PC-3 (cell line): ENCODE measurements at regions of chr13 and their contacts with region 1.

Region 1: GRCh38 chr13:102800145-102801041 is 1.5 kb downstream of the BIVM start:
- DNase-seq: peak; percentile 72
- ATAC-seq: peak; percentile 64
- H3K4me3 ChIP-seq: peak overlapping the region; percentile 85
- H3K27ac ChIP-seq: no peak overlapping the region
- H3K4me1 ChIP-seq: no peaks in the 10 kb centered on the region
- H3K27me3 ChIP-seq: no peaks in the 10 kb centered on the region
- CTCF ChIP-seq: peak; percentile 65

Region 2: GRCh38 chr13:102580552-102581169 is 219.7 kb before region 1 on chr13:
- CTCF ChIA-PET with region 1: no interaction called
- POLR2A ChIA-PET with region 1: no interaction called
- intact Hi-C with region 1: loop called (anchors 1 kb)
- DNase-seq: peak; percentile 78
- ATAC-seq: peak; percentile 76
- H3K4me3 ChIP-seq: no peak overlapping the region
- H3K27ac ChIP-seq: no peak overlapping the region
- H3K4me1 ChIP-seq: no peaks in the 10 kb centered on the region
- H3K27me3 ChIP-seq: peaks cover 18% of the 10 kb centered on the region
- CTCF ChIP-seq: peak; percentile 69

Region 3: GRCh38 chr13:102773441-102774215 is 26.8 kb before region 1 on chr13 and contains the start of gene TEX30:
- CTCF ChIA-PET with region 1: no interaction called
- POLR2A ChIA-PET with region 1: no interaction called
- intact Hi-C with region 1: loop called (anchors 2 kb)
- DNase-seq: peak; percentile 84
- ATAC-seq: peak; percentile 96
- H3K4me3 ChIP-seq: peak within 1 kb of the TSS; percentile 92
- H3K27ac ChIP-seq: no peak within 1 kb of the TSS
- H3K4me1 ChIP-seq: peaks cover 17% of the 10 kb centered on the region
- H3K27me3 ChIP-seq: no peaks in the 10 kb centered on the region
- CTCF ChIP-seq: no peak
- total RNA-seq, gene TEX30: 15.3 and 16.7 TPM in 2 replicates

Region 4: GRCh38 chr13:102825921-102826706 is 25.7 kb after region 1 on chr13:
- CTCF ChIA-PET with region 1: no interaction called
- POLR2A ChIA-PET with region 1: interaction called, 3 read pairs
- intact Hi-C with region 1: loop called (anchors 2 kb)
- DNase-seq: peak; percentile 79
- ATAC-seq: peak; percentile 76
- H3K4me3 ChIP-seq: peak overlapping the region; percentile 44
- H3K27ac ChIP-seq: peak overlapping the region; percentile 84
- H3K4me1 ChIP-seq: peaks cover 25% of the 10 kb centered on the region
- H3K27me3 ChIP-seq: no peaks in the 10 kb centered on the region
- CTCF ChIP-seq: no peak

Region 5: GRCh38 chr13:102870677-102871415 is 70.5 kb after region 1 on chr13:
- CTCF ChIA-PET with region 1: no interaction called
- POLR2A ChIA-PET with region 1: no interaction called
- intact Hi-C with region 1: no loop called
- DNase-seq: peak; percentile 63
- ATAC-seq: peak; percentile 72
- H3K4me3 ChIP-seq: no peak overlapping the region
- H3K27ac ChIP-seq: no peak overlapping the region
- H3K4me1 ChIP-seq: peaks cover 16% of the 10 kb centered on the region
- H3K27me3 ChIP-seq: no peaks in the 10 kb centered on the region
- CTCF ChIP-seq: peak; percentile 81